CD8-positive, alpha-beta T cell (primary cell): ENCODE measurements at regions of chr5 and their contacts with region 1.

Region 1: DNA sequence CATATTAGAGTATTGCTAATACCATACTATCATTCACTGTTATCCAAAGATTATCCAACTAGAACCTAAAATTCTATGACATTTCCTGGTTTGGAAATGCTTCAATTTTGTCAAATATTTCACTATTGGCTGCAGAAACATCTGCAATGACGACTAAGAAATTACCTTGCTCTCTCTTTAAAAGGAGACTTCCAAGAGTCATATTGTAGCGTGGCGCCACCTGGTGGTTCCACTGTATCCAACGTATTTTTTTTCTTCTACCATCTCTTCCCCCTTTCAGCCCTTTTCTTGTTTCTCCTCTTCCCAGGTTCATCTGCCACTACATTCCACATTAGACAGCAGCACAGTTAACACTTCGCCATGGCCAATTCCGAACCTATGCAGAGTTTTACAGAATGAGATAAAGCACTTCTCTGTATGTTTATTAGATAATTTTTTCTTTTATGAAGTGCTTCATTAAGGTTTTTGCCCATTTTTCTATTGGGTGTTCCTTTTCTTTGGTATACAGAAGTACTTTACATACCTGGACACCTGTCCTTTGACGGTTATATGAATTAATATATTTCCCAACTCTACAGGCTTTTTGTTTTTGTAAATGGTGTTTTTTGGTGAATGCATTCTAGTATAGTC is 153.5 kb downstream of the CDC42SE2 start:
- DNase-seq: peak; percentile 66 to 91 (median 85)
- ATAC-seq: peak; percentile 74
- H3K4me3 ChIP-seq: no peak overlapping the region
- H3K4me3 Mint-ChIP-seq: peak overlapping the region; percentile 64
- H3K27ac ChIP-seq: peak overlapping the region in 1 of 2 experiments; percentile 32
- H3K27ac Mint-ChIP-seq: peak overlapping the region; percentile 91
- H3K4me1 ChIP-seq: peaks cover 26% of the 10 kb centered on the region
- H3K4me1 Mint-ChIP-seq: peaks cover 45% of the 10 kb centered on the region
- H3K27me3 ChIP-seq: no peaks in the 10 kb centered on the region
- H3K27me3 Mint-ChIP-seq: no peaks in the 10 kb centered on the region
- CTCF ChIP-seq: peak; percentile 95

Region 2: DNA sequence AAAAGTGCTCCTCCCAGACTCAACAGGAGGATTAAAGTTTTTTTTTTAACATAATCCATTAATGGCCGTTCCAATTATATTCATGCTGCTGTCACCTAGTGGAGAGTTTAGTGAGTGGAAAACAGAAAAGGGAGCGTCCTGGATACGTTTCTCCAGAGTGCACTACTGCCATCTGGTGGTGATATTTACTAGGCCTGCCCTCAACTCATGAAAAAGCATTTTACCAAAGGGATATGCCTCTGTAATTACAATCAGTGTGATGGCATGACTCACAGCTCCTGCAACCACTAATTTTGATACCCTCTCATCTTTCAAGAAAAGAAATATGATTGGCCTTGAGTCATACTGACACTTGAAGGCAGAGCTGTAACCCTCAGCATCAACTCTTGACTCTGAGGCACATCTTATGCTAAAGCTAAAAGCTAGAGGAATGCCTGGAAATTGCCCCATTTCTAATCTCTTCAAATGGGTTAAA is 1649.4 kb before region 1 on chr5:
- CTCF ChIA-PET with region 1: no interaction called
- POLR2A ChIA-PET with region 1: no interaction called
- intact Hi-C with region 1: loop called in 1 of 2 experiments (anchors 10 kb)
- DNase-seq: peak in 8 of 9 experiments; percentile 1 to 75 (median 42)
- ATAC-seq: peak; percentile 64
- H3K4me3 ChIP-seq: no peak overlapping the region
- H3K4me3 Mint-ChIP-seq: no peak overlapping the region
- H3K27ac ChIP-seq: no peak overlapping the region
- H3K27ac Mint-ChIP-seq: no peak overlapping the region
- H3K4me1 ChIP-seq: no peaks in the 10 kb centered on the region
- H3K4me1 Mint-ChIP-seq: peaks cover 2% of the 10 kb centered on the region
- H3K27me3 ChIP-seq: no peaks in the 10 kb centered on the region
- H3K27me3 Mint-ChIP-seq: peaks cover 6% of the 10 kb centered on the region
- CTCF ChIP-seq: peak; percentile 90

Region 3: DNA sequence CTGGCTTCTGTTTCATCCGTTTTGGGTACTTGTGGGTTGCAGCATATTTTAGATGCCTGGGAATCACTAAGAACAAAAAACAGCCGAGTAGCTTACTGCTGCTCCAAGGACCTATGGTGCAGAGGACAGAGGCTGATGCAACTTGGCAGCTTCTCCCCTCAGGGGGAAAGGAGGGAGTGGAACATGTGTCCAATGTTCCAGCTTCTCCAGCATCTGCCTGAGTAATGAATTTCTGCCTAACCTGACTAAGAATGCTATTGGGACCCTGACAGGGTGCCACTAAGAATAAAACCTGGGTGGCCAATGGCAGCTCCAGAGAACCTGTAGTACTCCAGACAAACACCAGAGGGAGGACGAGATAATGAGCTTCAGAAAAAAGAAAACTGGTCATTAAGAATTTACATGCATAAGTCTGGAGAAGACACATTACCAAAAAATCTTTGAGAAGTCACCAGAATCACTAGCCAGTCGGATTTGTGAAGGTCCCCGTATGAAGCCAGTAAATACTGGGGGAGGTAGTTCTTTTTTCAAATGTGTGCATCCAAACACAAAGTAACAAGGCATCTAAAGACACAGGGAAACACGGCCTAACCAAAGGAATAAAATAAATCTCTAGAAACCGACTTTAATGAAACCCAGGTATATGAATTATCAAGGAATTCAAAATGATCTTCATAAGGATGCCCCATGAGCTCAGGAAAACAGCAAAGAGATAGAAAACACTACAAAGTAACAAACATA is 545.8 kb before region 1 on chr5:
- CTCF ChIA-PET with region 1: interaction called, 4 read pairs
- POLR2A ChIA-PET with region 1: no interaction called
- intact Hi-C with region 1: loop called (anchors 1 kb)
- DNase-seq: peak; percentile 2 to 66 (median 28)
- ATAC-seq: peak; percentile 59
- H3K4me3 ChIP-seq: no peak overlapping the region
- H3K4me3 Mint-ChIP-seq: no peak overlapping the region
- H3K27ac ChIP-seq: no peak overlapping the region
- H3K27ac Mint-ChIP-seq: no peak overlapping the region
- H3K4me1 ChIP-seq: no peaks in the 10 kb centered on the region
- H3K4me1 Mint-ChIP-seq: no peaks in the 10 kb centered on the region
- H3K27me3 ChIP-seq: peaks cover 0 to 3% of the 10 kb centered on the region in 2 experiments
- H3K27me3 Mint-ChIP-seq: no peaks in the 10 kb centered on the region
- CTCF ChIP-seq: peak; percentile 66

Region 4: DNA sequence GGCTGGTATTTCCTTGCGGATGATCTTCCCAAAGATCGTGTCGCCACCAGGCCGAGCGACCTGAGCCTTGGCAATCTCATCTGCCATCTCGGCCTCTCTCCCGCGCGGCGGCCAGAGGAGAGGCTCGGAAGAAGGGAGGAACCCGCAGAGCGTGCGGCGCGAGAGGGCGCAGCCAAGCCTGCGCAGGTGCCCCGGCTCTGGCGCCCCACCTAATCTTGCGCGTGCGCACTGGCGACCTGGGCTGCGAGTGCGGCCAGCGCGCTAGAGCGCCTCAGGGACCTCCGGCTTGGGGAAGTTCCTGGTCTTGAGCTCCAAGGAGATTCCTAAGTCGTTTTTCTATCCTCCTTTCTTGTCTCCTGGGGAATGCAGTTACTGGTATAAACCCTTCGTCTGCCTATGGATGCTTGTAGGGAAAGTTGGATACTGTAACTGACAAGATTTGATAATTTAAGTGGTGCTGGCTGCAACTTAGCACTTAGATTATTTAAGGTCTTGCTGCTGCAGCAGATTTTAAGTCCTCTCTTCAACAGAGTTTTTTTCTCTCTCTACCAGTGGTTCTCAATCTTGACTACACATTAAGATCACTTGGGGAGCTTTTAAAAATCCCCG is 252.1 kb before region 1 on chr5 and contains the start of gene HINT1:
- CTCF ChIA-PET with region 1: interaction called, 4 read pairs
- POLR2A ChIA-PET with region 1: interaction called, 4 read pairs
- intact Hi-C with region 1: loop called (anchors 1 kb)
- DNase-seq: peak; percentile 81 to 96 (median 93)
- ATAC-seq: peak; percentile 83
- H3K4me3 ChIP-seq: peak within 1 kb of the TSS; percentile 85 to 90
- H3K4me3 Mint-ChIP-seq: peak within 1 kb of the TSS; percentile 95
- H3K27ac ChIP-seq: peak within 1 kb of the TSS; percentile 85 to 91
- H3K27ac Mint-ChIP-seq: peak within 1 kb of the TSS; percentile 98
- H3K4me1 ChIP-seq: peaks cover 40% of the 10 kb centered on the region
- H3K4me1 Mint-ChIP-seq: peaks cover 49% of the 10 kb centered on the region
- H3K27me3 ChIP-seq: no peaks in the 10 kb centered on the region
- H3K27me3 Mint-ChIP-seq: no peaks in the 10 kb centered on the region
- CTCF ChIP-seq: no peak
- total RNA-seq, gene HINT1: 243 to 252 TPM

Region 5: DNA sequence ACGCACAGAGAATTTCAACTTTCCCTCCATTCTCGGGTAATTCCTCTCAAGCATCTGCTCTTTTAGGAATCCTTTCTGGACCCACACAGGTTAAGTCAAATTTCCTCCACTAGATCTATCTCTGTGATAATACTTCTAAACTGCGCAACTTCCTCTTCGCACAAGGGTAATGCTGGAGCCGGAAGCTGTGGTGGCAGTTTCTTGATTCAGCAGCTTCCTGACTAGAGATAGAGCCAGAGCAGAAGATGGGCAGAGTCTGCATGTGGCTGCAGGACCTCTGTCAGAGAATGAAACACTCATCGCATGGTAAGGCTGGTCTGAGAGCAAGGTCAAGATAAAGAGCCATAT is 164.6 kb before region 1 on chr5:
- CTCF ChIA-PET with region 1: no interaction called
- POLR2A ChIA-PET with region 1: no interaction called
- intact Hi-C with region 1: no loop called
- DNase-seq: peak; percentile 63 to 95 (median 82)
- ATAC-seq: peak; percentile 75
- H3K4me3 ChIP-seq: peak overlapping the region; percentile 41 to 53
- H3K4me3 Mint-ChIP-seq: peak overlapping the region; percentile 94
- H3K27ac ChIP-seq: peak overlapping the region; percentile 55 to 89
- H3K27ac Mint-ChIP-seq: peak overlapping the region; percentile 95
- H3K4me1 ChIP-seq: peaks cover 60% of the 10 kb centered on the region
- H3K4me1 Mint-ChIP-seq: peaks cover 73% of the 10 kb centered on the region
- H3K27me3 ChIP-seq: no peaks in the 10 kb centered on the region
- H3K27me3 Mint-ChIP-seq: no peaks in the 10 kb centered on the region
- CTCF ChIP-seq: no peak

Region 6: GRCh38 chr5:131394128-131394527 is 23.2 kb before region 1 on chr5:
- CTCF ChIA-PET with region 1: no interaction called
- POLR2A ChIA-PET with region 1: no interaction called
- intact Hi-C with region 1: loop called in 1 of 2 experiments (anchors 2 kb)
- DNase-seq: peak in 6 of 9 experiments; percentile 24 to 92 (median 47)
- ATAC-seq: peak; percentile 87
- H3K4me3 ChIP-seq: no peak overlapping the region
- H3K4me3 Mint-ChIP-seq: peak overlapping the region; percentile 52
- H3K27ac ChIP-seq: peak overlapping the region; percentile 50 to 85
- H3K27ac Mint-ChIP-seq: peak overlapping the region; percentile 89
- H3K4me1 ChIP-seq: peaks cover 66% of the 10 kb centered on the region
- H3K4me1 Mint-ChIP-seq: peaks cover 86% of the 10 kb centered on the region
- H3K27me3 ChIP-seq: no peaks in the 10 kb centered on the region
- H3K27me3 Mint-ChIP-seq: no peaks in the 10 kb centered on the region
- CTCF ChIP-seq: no peak